ENCODE measurements at regions of chr6 and their contacts with region 1.

Region 1: DNA sequence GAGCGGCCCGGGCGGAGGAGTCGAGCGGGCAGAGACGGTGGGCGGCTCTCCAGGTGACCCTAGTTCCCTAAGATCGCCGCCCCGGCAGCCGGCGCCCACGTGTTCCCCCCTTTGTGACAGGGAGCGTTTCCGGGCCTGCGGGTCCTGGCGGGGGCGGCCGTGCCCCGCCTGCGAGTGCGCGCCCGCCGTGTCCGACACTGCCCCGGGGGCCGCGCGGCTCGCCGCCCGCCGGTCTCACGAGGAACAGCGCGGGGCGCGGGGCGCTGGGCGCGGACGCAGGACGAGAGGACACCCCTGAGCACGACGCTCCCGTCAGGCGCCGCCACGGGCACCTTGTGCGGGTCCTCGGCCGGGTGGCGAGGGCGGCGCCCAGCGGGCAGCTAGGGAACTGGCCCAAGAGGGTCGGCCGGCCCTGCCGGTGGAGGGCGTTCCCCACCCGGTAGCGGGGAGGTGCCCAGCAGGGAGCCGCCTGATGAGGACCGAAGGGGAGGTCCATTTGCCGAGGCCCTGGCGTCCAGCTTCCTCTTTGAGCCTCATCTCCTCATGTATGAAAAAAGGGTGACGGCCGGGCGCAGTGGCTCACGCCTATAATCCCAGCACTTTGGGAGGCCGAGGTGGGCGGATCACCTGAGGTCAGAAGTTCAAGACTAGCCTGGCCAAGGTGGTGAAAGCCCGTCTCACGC is at the start of gene VARS1:
- DNase-seq: peak; percentile 96
- ATAC-seq: peak; percentile 91
- H3K4me3 ChIP-seq: peak within 1 kb of the TSS; percentile 72 to 96 (median 95)
- H3K4me3 Mint-ChIP-seq: peak within 1 kb of the TSS; percentile 97
- H3K27ac ChIP-seq: peak within 1 kb of the TSS; percentile 75 to 87
- H3K27ac Mint-ChIP-seq: peak within 1 kb of the TSS; percentile 99
- H3K4me1 ChIP-seq: peaks cover 45 to 59% of the 10 kb centered on the region in 2 donors
- H3K4me1 Mint-ChIP-seq: peaks cover 54% of the 10 kb centered on the region
- H3K27me3 ChIP-seq: no peaks in the 10 kb centered on the region
- H3K27me3 Mint-ChIP-seq: no peaks in the 10 kb centered on the region
- CTCF ChIP-seq: peak; percentile 79
- total RNA-seq, gene VARS1: 47.4 and 52.3 TPM in 2 replicates

Region 2: GRCh38 chr6:31383149-31383548 is 412.6 kb before region 1 on chr6:
- CTCF ChIA-PET with region 1: no interaction called
- POLR2A ChIA-PET with region 1: no interaction called
- intact Hi-C with region 1: no loop called
- DNase-seq: no peak
- ATAC-seq: no peak
- H3K4me3 ChIP-seq: no peak overlapping the region
- H3K4me3 Mint-ChIP-seq: no peak overlapping the region
- H3K27ac ChIP-seq: no peak overlapping the region
- H3K27ac Mint-ChIP-seq: no peak overlapping the region
- H3K4me1 ChIP-seq: no peaks in the 10 kb centered on the region
- H3K4me1 Mint-ChIP-seq: no peaks in the 10 kb centered on the region
- H3K27me3 ChIP-seq: peaks cover 0 to 10% (median 4%) of the 10 kb centered on the region in 4 experiments
- H3K27me3 Mint-ChIP-seq: peaks cover 14% of the 10 kb centered on the region
- CTCF ChIP-seq: no peak

Region 3: DNA sequence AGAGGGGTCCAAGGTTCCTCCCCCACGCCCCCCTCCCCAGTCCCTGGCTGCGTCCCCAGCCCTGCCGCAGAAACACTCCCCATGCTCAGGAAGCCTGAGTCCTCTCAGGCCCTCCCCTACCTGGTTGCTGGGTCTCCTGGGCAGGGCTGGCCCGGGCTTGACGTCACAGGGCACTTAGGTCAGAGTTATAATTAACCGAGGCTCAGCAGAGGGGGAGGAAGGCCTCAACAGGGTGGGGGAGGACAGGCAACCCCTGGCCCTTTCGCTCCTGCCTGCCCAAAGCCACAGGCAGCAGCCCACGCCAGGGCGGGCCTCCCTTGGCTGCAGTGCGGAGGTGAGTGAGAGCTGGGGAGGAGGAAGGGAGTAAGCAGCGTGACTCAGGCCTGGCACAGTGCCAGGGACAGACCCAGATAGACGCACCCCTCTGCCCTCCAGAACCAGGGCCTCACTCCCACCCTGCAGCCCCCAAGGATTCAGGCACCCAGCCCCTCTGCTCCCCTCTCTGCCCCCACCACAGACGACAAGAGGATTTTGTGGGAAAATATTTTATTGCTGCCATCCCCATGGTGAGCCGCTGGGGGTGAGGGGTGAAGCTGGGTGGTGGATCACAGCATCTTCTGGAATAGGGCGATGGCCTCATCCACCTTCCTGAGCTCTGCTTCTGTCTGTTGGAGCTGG is 18.6 kb before region 1 on chr6 and contains the start of gene VWA7:
- CTCF ChIA-PET with region 1: interaction called, 4 read pairs
- POLR2A ChIA-PET with region 1: no interaction called
- intact Hi-C with region 1: loop called (anchors 2 kb)
- DNase-seq: peak; percentile 85
- ATAC-seq: peak; percentile 88
- H3K4me3 ChIP-seq: peak within 1 kb of the TSS in 2 of 5 experiments; percentile 5 to 21
- H3K4me3 Mint-ChIP-seq: peak within 1 kb of the TSS; percentile 64
- H3K27ac ChIP-seq: peak within 1 kb of the TSS; percentile 66 to 67
- H3K27ac Mint-ChIP-seq: peak within 1 kb of the TSS; percentile 90
- H3K4me1 ChIP-seq: peaks cover 15 to 28% of the 10 kb centered on the region in 2 donors
- H3K4me1 Mint-ChIP-seq: peaks cover 23% of the 10 kb centered on the region
- H3K27me3 ChIP-seq: no peaks in the 10 kb centered on the region
- H3K27me3 Mint-ChIP-seq: no peaks in the 10 kb centered on the region
- CTCF ChIP-seq: no peak
- total RNA-seq, gene VWA7: 5.2 and 5.6 TPM in 2 replicates

Region 4: GRCh38 chr6:31806465-31807272 is 10.9 kb after region 1 on chr6 and contains the start of gene LSM2:
- CTCF ChIA-PET with region 1: interaction called, 20 read pairs
- POLR2A ChIA-PET with region 1: interaction called, 38 read pairs
- intact Hi-C with region 1: loop called (anchors 1 kb)
- DNase-seq: peak; percentile 97
- ATAC-seq: peak; percentile 98
- H3K4me3 ChIP-seq: peak within 1 kb of the TSS; percentile 68 to 84 (median 84)
- H3K4me3 Mint-ChIP-seq: peak within 1 kb of the TSS; percentile 87
- H3K27ac ChIP-seq: peak within 1 kb of the TSS; percentile 77 to 93
- H3K27ac Mint-ChIP-seq: peak within 1 kb of the TSS; percentile 88
- H3K4me1 ChIP-seq: peaks cover 8 to 11% of the 10 kb centered on the region in 2 donors
- H3K4me1 Mint-ChIP-seq: peaks cover 16% of the 10 kb centered on the region
- H3K27me3 ChIP-seq: no peaks in the 10 kb centered on the region
- H3K27me3 Mint-ChIP-seq: no peaks in the 10 kb centered on the region
- CTCF ChIP-seq: peak; percentile 34
- total RNA-seq, gene LSM2: 45.3 and 52.4 TPM in 2 replicates

Region 5: GRCh38 chr6:31815025-31815838 is 19.5 kb after region 1 on chr6 and contains the starts of genes HSPA1A and HSPA1L:
- CTCF ChIA-PET with region 1: interaction called, 4 read pairs
- POLR2A ChIA-PET with region 1: interaction called, 14 read pairs
- intact Hi-C with region 1: loop called (anchors 2 kb)
- DNase-seq: peak; percentile 74
- ATAC-seq: peak; percentile 59
- H3K4me3 ChIP-seq: peak within 1 kb of the TSS; percentile 50 to 79 (median 73)
- H3K4me3 Mint-ChIP-seq: peak within 1 kb of the TSS; percentile 96
- H3K27ac ChIP-seq: peak within 1 kb of the TSS; percentile 11 to 73
- H3K27ac Mint-ChIP-seq: peak within 1 kb of the TSS; percentile 93
- H3K4me1 ChIP-seq: peaks cover 15 to 30% of the 10 kb centered on the region in 2 donors
- H3K4me1 Mint-ChIP-seq: peaks cover 22% of the 10 kb centered on the region
- H3K27me3 ChIP-seq: no peaks in the 10 kb centered on the region
- H3K27me3 Mint-ChIP-seq: no peaks in the 10 kb centered on the region
- CTCF ChIP-seq: no peak
- total RNA-seq, gene HSPA1A: 58.8 and 61.2 TPM in 2 replicates
- total RNA-seq, gene HSPA1L: 2.0 and 2.4 TPM in 2 replicates

Region 6: GRCh38 chr6:31844507-31844906 is 48.8 kb after region 1 on chr6:
- CTCF ChIA-PET with region 1: no interaction called
- POLR2A ChIA-PET with region 1: no interaction called
- intact Hi-C with region 1: no loop called
- DNase-seq: no peak
- ATAC-seq: no peak
- H3K4me3 ChIP-seq: no peak overlapping the region
- H3K4me3 Mint-ChIP-seq: no peak overlapping the region
- H3K27ac ChIP-seq: no peak overlapping the region
- H3K27ac Mint-ChIP-seq: no peak overlapping the region
- H3K4me1 ChIP-seq: peaks cover 0 to 3% of the 10 kb centered on the region in 2 donors
- H3K4me1 Mint-ChIP-seq: no peaks in the 10 kb centered on the region
- H3K27me3 ChIP-seq: no peaks in the 10 kb centered on the region
- H3K27me3 Mint-ChIP-seq: no peaks in the 10 kb centered on the region
- CTCF ChIP-seq: no peak